PC-3 (cell line): ENCODE measurements at regions of chr14 and their contacts with region 1.

Region 1: DNA sequence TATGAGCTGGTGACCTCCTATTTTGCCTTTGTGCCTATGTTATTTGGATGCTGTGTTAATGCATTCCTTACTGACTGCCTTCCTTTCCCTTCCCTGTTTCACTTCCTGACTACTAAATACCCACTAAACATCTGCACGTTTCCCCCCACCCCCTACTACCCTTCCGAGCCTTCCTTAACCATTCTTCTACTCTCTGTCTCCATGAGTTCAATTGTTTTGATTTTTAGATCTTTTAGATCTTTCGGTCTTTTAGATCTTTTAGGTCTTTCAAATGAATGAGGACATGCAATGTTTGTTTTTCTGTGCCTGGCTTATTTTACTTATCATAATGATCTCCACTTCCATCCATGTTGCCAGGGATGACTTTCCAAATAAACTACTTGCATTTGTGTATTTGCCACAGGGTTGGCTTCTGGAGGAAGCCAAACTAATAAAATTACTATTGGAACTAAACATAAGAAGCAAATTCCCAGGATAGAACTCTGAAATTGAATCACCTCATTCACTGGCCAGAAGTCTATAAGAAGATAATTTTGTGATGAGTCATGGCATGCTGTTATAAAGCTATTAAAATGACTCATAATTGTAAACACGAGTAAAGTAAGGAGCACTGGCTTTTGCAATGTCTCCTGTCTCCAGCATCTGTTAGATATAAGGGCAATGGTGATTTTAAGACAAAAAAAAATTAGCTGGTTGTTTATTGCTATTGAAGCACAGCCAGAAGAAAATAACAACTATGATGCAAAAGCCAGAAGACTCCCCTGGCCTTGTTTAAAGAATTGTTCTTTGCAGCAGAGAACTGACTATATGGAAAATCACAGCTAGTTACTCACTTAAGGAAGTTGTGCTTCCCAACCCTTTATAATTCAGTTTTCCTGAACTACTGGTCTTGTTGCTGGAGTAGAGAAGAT is 586.3 kb downstream of the LRFN5 start:
- DNase-seq: peak; percentile 98
- ATAC-seq: peak; percentile 85
- H3K4me3 ChIP-seq: peak overlapping the region; percentile 46; the same call in 1 of the 2 replicates
- H3K27ac ChIP-seq: peak overlapping the region; percentile 95
- H3K4me1 ChIP-seq: peaks cover 37% of the 10 kb centered on the region
- H3K27me3 ChIP-seq: no peaks in the 10 kb centered on the region
- CTCF ChIP-seq: no peak

Region 2: GRCh38 chr14:41663473-41663850 is 529.5 kb before region 1 on chr14:
- CTCF ChIA-PET with region 1: no interaction called
- POLR2A ChIA-PET with region 1: no interaction called
- intact Hi-C with region 1: no loop called
- DNase-seq: peak; percentile 15
- ATAC-seq: peak; percentile 54
- H3K4me3 ChIP-seq: no peak overlapping the region
- H3K27ac ChIP-seq: no peak overlapping the region
- H3K4me1 ChIP-seq: no peaks in the 10 kb centered on the region
- H3K27me3 ChIP-seq: no peaks in the 10 kb centered on the region
- CTCF ChIP-seq: no peak

Region 3: DNA sequence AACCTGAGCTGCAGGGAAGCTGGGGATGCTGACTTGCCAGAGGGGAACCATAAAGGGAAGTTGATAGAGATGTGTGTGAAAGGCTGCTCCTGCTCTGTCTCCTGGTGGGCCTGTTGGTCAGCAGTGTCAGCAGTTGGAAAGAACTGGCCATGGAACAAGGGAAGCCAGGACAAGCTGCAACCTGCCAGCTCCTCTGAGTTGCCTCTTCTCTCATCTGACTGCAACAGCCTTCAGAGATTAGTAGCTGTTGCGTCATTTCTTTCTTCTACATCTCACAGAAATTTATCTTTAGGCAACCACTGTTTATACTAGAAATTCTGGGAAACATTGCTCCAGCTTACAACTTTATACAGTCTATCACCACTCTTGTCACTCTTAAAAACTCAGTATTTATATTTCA is 362.3 kb before region 1 on chr14:
- CTCF ChIA-PET with region 1: no interaction called
- POLR2A ChIA-PET with region 1: no interaction called
- intact Hi-C with region 1: loop called (anchors 5 kb)
- DNase-seq: no peak
- ATAC-seq: peak; percentile 45
- H3K4me3 ChIP-seq: no peak overlapping the region
- H3K27ac ChIP-seq: no peak overlapping the region
- H3K4me1 ChIP-seq: peaks cover 17% of the 10 kb centered on the region; the same call in 1 of the 2 replicates
- H3K27me3 ChIP-seq: no peaks in the 10 kb centered on the region
- CTCF ChIP-seq: no peak

Region 4: DNA sequence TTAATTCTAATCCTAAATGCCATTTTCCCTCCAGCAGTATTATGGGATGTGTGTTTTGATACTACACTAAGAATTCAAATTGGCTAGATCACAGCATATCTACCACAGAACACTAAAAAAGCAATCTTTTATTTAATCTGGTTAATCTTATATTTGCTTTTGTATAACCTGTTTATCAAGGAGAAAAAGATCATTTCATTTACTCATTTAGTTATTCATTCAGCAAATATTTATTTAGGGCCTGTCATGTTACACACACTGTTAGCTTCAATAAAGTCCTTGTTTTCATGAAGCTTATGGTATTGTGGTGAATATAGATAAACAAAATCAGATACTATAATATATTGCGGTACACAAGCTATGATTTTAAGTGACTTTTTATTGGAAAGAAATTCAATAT is 235.6 kb before region 1 on chr14:
- CTCF ChIA-PET with region 1: no interaction called
- POLR2A ChIA-PET with region 1: no interaction called
- intact Hi-C with region 1: loop called (anchors 1 kb)
- DNase-seq: peak; percentile 87
- ATAC-seq: peak; percentile 94
- H3K4me3 ChIP-seq: no peak overlapping the region
- H3K27ac ChIP-seq: peak overlapping the region; percentile 54; the same call in 1 of the 2 replicates
- H3K4me1 ChIP-seq: peaks cover 16% of the 10 kb centered on the region
- H3K27me3 ChIP-seq: no peaks in the 10 kb centered on the region
- CTCF ChIP-seq: no peak

Region 5: DNA sequence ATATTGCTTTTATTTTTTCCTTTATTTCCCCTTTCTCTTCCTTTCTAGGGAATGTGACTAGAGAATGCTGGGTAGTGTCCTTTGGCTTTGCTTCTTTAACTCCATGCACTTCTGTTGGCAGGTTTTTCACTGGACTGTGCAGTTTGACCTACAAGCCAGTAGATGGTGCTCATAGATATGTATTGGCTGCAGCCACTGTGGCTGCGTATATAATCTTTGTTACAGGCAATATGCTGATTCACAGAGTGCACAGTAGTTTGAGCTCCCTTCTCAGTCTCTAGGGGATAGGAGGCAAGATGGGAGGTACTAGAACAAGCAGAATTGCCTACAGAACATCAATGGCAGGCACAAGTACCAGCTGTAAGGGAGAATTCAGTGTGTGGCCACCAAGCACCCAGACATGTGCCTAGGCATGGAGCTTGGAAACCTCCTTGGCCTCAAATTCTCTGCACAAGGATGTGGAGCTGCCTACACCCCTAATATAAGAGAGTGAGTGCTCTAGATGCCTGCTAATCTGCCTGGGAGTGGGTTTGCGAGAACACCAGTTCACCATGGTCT is 82.8 kb before region 1 on chr14:
- CTCF ChIA-PET with region 1: interaction called, 4 read pairs
- POLR2A ChIA-PET with region 1: no interaction called
- intact Hi-C with region 1: loop called (anchors 1 kb)
- DNase-seq: peak; percentile 85
- ATAC-seq: peak; percentile 78
- H3K4me3 ChIP-seq: no peak overlapping the region
- H3K27ac ChIP-seq: no peak overlapping the region
- H3K4me1 ChIP-seq: peaks cover 17% of the 10 kb centered on the region
- H3K27me3 ChIP-seq: no peaks in the 10 kb centered on the region
- CTCF ChIP-seq: peak; percentile 95

Region 6: GRCh38 chr14:42130809-42131208 is 62.2 kb before region 1 on chr14:
- CTCF ChIA-PET with region 1: no interaction called
- POLR2A ChIA-PET with region 1: no interaction called
- intact Hi-C with region 1: no loop called
- DNase-seq: peak; percentile 44
- ATAC-seq: no peak
- H3K4me3 ChIP-seq: no peak overlapping the region
- H3K27ac ChIP-seq: no peak overlapping the region
- H3K4me1 ChIP-seq: peaks cover 5% of the 10 kb centered on the region
- H3K27me3 ChIP-seq: no peaks in the 10 kb centered on the region
- CTCF ChIP-seq: no peak

Region 7: GRCh38 chr14:42214981-42215491 is 22.0 kb after region 1 on chr14:
- CTCF ChIA-PET with region 1: interaction called, 6 read pairs
- POLR2A ChIA-PET with region 1: no interaction called
- intact Hi-C with region 1: loop called (anchors 1 kb)
- DNase-seq: peak; percentile 94
- ATAC-seq: peak; percentile 95
- H3K4me3 ChIP-seq: peak overlapping the region; percentile 4; the same call in 1 of the 2 replicates
- H3K27ac ChIP-seq: peak overlapping the region; percentile 90
- H3K4me1 ChIP-seq: peaks cover 29% of the 10 kb centered on the region
- H3K27me3 ChIP-seq: no peaks in the 10 kb centered on the region
- CTCF ChIP-seq: no peak

Region 8: GRCh38 chr14:42248151-42248550 is 55.2 kb after region 1 on chr14:
- CTCF ChIA-PET with region 1: no interaction called
- POLR2A ChIA-PET with region 1: no interaction called
- intact Hi-C with region 1: no loop called
- DNase-seq: no peak
- ATAC-seq: no peak
- H3K4me3 ChIP-seq: no peak overlapping the region
- H3K27ac ChIP-seq: no peak overlapping the region
- H3K4me1 ChIP-seq: no peaks in the 10 kb centered on the region
- H3K27me3 ChIP-seq: no peaks in the 10 kb centered on the region
- CTCF ChIP-seq: no peak

Region 9: GRCh38 chr14:42269234-42269633 is 76.2 kb after region 1 on chr14:
- CTCF ChIA-PET with region 1: no interaction called
- POLR2A ChIA-PET with region 1: no interaction called
- intact Hi-C with region 1: loop called (anchors 2 kb)
- DNase-seq: peak; percentile 32
- ATAC-seq: peak; percentile 94
- H3K4me3 ChIP-seq: no peak overlapping the region
- H3K27ac ChIP-seq: no peak overlapping the region
- H3K4me1 ChIP-seq: peaks cover 10% of the 10 kb centered on the region
- H3K27me3 ChIP-seq: no peaks in the 10 kb centered on the region
- CTCF ChIP-seq: no peak